ENCODE measurements at regions of chr9 and their contacts with region 1.

Region 1: DNA sequence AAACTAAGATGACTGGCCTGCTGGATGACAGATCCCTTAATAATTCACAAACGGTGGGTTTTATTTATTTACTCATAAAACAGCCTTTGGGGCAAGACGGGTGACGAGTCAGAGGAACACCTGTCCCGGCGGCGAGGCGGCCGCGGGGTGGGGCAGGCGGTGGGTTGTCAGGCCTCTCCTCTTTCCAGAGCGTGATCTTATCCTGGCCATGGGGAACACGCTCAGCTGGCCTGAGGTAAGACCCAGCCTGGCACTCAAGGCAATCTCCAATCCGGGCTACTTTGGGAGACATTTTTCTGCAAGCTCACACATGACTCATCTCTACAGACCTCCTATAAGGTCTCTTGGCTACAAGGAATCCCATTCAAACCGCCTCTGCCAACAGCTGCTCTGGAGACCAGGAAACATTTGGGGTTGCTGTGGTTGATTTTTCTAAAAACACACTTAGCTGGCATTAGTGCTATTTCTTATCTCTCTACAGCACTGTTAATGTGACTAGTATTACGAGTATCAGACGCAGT is 6.3 kb downstream of the RAPGEF1 start:
- DNase-seq: no peak
- ATAC-seq: no peak
- H3K4me3 Mint-ChIP-seq: peak overlapping the region; percentile 79
- H3K27ac Mint-ChIP-seq: peak overlapping the region; percentile 89
- H3K4me1 Mint-ChIP-seq: peaks cover 92% of the 10 kb centered on the region
- H3K27me3 Mint-ChIP-seq: no peaks in the 10 kb centered on the region
- CTCF ChIP-seq: no peak

Region 2: GRCh38 chr9:130023144-130023787 is 1710.3 kb before region 1 on chr9:
- CTCF ChIA-PET with region 1: no interaction called
- POLR2A ChIA-PET with region 1: no interaction called
- intact Hi-C with region 1: loop called (anchors 10 kb)
- DNase-seq: no peak
- ATAC-seq: peak; percentile 78
- H3K4me3 Mint-ChIP-seq: peak overlapping the region; percentile 85
- H3K27ac Mint-ChIP-seq: peak overlapping the region; percentile 98
- H3K4me1 Mint-ChIP-seq: peaks cover 98% of the 10 kb centered on the region
- H3K27me3 Mint-ChIP-seq: no peaks in the 10 kb centered on the region
- CTCF ChIP-seq: no peak

Region 3: GRCh38 chr9:131621551-131622358 is 111.8 kb before region 1 on chr9:
- CTCF ChIA-PET with region 1: interaction called, 22 read pairs
- POLR2A ChIA-PET with region 1: interaction called, 567 read pairs
- intact Hi-C with region 1: loop called (anchors 1 kb)
- DNase-seq: peak; percentile 39
- ATAC-seq: peak; percentile 79
- H3K4me3 Mint-ChIP-seq: peak overlapping the region; percentile 74
- H3K27ac Mint-ChIP-seq: peak overlapping the region; percentile 88
- H3K4me1 Mint-ChIP-seq: peaks cover 47% of the 10 kb centered on the region
- H3K27me3 Mint-ChIP-seq: no peaks in the 10 kb centered on the region
- CTCF ChIP-seq: no peak

Region 4: DNA sequence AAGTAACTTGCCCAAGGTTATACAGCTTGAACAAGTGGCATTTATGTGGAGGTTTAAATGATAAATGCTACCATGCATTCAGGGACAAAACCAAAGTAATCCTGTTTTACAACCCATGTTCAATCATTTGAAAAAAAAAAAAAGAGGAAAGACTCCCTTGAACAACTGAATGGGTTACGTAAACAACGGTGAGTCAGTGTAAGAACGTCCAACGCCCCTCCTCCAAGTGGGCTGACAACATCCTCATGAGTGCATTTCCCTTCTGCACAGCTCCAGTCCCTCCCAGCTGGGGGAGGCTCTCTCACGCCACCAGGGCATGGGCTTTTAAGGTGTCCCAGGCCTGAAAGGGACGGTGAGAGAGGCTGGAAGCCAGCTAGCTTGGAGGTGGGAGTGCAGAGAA is 98.3 kb before region 1 on chr9:
- CTCF ChIA-PET with region 1: interaction called, 36 read pairs
- POLR2A ChIA-PET with region 1: interaction called, 567 read pairs
- intact Hi-C with region 1: loop called (anchors 1 kb)
- DNase-seq: peak; percentile 29
- ATAC-seq: peak; percentile 77
- H3K4me3 Mint-ChIP-seq: peak overlapping the region; percentile 28
- H3K27ac Mint-ChIP-seq: peak overlapping the region; percentile 74
- H3K4me1 Mint-ChIP-seq: peaks cover 58% of the 10 kb centered on the region
- H3K27me3 Mint-ChIP-seq: no peaks in the 10 kb centered on the region
- CTCF ChIP-seq: no peak

Region 5: DNA sequence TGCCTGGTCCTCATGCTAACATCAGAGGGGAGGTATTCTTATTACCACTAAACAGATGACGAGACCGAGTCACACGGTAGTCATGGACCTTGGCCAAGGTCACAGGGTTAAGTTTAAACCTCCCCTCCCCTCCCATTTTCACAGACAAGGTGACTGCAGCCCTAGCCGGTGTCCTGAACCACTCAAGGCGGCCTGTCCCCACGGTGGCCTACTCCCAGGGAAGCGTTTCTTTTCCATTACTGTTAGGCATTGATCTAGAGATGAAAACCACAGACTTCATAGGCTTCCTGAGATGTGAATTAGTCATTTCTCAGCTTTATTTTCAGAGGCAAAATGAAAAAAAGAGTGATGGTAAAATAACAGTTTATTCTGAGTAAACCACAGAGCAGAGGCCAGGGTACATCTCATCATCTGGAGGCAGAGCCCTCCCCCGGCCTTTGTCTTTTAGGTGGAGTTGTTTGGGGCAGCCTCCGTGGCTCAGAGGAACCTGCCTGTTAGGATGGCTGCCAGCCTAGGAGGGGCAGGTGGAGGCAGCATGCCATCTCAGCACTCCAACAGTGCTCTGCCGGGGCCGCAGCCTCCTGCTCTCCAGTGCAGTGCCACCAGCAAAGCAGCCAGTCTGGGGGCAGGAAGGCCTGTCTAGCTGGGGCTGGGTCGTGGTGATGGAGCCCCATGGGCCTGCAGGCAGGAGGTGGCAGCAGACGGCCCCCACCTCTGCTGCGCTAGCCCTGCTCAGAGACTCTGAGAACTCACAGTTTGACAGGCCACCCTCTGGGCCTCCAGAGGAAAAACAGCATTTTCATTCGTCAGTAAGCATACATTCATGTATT is 64.9 kb before region 1 on chr9:
- CTCF ChIA-PET with region 1: interaction called, 5 read pairs
- POLR2A ChIA-PET with region 1: interaction called, 683 read pairs
- intact Hi-C with region 1: loop called (anchors 2 kb)
- DNase-seq: no peak
- ATAC-seq: peak; percentile 61
- H3K4me3 Mint-ChIP-seq: peak overlapping the region; percentile 78
- H3K27ac Mint-ChIP-seq: peak overlapping the region; percentile 93
- H3K4me1 Mint-ChIP-seq: peaks cover 99% of the 10 kb centered on the region
- H3K27me3 Mint-ChIP-seq: no peaks in the 10 kb centered on the region
- CTCF ChIP-seq: no peak

Region 6: DNA sequence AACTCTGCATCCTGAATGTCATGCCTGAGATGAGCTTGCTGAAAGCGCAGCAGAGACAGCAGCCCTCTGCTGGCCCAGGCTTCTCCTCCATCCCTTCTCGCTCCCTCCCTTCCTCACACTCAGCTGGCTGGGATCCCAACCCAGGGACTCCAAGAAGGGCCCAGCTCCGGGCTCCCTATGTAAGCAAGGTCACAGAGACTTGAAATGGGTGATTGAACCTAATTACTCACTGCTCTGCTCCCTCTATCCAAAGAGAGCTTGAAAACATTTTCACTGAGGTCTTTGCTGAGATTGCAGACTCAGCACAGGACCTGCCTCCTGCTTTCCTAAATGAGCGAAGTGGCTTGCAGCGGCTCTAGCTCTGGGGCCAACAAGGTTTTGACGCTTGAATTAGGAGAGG is 36.5 kb before region 1 on chr9:
- CTCF ChIA-PET with region 1: no interaction called
- POLR2A ChIA-PET with region 1: interaction called, 10 read pairs
- intact Hi-C with region 1: no loop called
- DNase-seq: no peak
- ATAC-seq: no peak
- H3K4me3 Mint-ChIP-seq: no peak overlapping the region
- H3K27ac Mint-ChIP-seq: no peak overlapping the region
- H3K4me1 Mint-ChIP-seq: peaks cover 97% of the 10 kb centered on the region
- H3K27me3 Mint-ChIP-seq: no peaks in the 10 kb centered on the region
- CTCF ChIP-seq: no peak

Region 7: DNA sequence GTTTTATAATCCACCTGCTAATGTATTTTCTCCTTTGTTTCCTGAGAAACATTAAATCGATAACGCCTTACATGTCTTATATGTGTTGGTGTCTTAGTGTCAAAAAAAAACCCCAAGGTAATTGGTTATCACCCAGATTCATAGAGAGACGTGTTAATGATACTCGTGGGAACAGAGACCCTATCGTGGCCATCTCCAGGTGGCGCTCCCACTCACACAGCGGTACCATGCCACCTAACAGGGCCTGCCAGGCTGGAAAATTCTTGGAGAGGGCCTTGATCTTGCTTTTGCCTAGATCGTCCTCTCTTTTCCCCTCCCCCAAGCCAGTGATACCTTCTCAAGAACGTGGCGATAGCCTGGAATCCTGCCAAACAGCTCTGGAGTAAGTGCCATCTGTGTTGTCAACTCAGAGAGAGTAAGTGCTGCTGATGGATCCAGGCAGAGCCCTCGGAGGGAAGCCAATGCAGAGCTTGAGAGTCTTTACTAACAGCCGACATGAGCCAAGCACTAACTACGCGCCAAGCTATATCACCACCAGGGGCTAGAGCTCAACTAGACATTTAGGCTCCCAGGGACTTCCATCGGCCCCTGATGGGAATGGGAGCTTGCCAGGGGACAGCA is 11.5 kb before region 1 on chr9:
- CTCF ChIA-PET with region 1: interaction called, 20 read pairs
- POLR2A ChIA-PET with region 1: interaction called, 80 read pairs
- intact Hi-C with region 1: loop called (anchors 2 kb)
- DNase-seq: no peak
- ATAC-seq: no peak
- H3K4me3 Mint-ChIP-seq: no peak overlapping the region
- H3K27ac Mint-ChIP-seq: peak overlapping the region; percentile 35
- H3K4me1 Mint-ChIP-seq: peaks cover 94% of the 10 kb centered on the region
- H3K27me3 Mint-ChIP-seq: no peaks in the 10 kb centered on the region
- CTCF ChIP-seq: no peak

Region 8: GRCh38 chr9:131762356-131762932 is 28.8 kb after region 1 on chr9:
- CTCF ChIA-PET with region 1: no interaction called
- POLR2A ChIA-PET with region 1: no interaction called
- intact Hi-C with region 1: no loop called
- DNase-seq: peak; percentile 79
- ATAC-seq: peak; percentile 98
- H3K4me3 Mint-ChIP-seq: no peak overlapping the region
- H3K27ac Mint-ChIP-seq: no peak overlapping the region
- H3K4me1 Mint-ChIP-seq: no peaks in the 10 kb centered on the region
- H3K27me3 Mint-ChIP-seq: peaks cover 15% of the 10 kb centered on the region
- CTCF ChIP-seq: peak; percentile 66

Measured in activated B cell treated with CpG ODN at 0.5 μM for 24 hours (primary cell).